ENCODE measurements at regions of chr14 and their contacts with region 1.

Region 1: DNA sequence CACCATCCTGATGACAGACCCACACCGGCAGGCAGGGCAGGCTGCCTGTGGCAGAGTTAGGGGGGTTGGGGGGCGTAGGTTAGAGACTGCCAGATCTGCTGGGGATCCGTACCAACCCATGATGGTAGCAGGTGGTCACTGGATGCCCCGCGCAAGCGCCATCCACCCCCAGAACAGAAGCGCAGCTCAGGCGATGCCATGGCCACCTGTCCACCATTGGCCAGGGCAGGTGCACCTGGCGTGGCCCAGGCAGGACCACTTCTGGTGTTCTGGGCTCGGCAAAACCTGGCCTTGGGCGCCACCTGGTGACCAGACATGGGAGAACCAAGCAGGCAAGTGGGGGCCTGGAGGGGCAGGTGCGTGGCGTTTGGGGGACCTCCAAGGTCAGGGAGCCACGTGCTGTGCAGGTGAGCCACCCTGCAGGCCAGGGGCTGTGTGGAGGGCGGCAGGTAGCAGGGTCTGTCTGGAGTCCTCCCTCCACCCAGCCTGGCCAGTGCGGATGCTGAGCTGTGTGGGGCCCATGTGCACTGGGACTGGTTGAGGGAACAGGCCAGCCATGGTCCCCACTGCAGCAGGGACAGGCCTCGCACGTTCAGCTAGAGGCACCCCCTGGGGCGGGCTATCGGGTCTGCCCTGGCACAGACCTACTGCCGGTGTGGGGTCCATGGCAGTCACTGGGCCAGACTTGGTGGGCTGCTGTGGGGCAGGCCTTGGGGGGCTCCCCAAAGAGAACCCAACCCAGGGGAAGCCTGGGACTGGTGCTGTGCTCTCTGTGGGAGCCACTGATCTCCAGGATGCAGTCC is 15.6 kb downstream of the BAG5 start:
- DNase-seq: peak; percentile 69 to 85 (median 83)
- H3K4me3 ChIP-seq: no peak overlapping the region
- H3K27ac ChIP-seq: no peak overlapping the region
- H3K4me1 ChIP-seq: peaks cover 22% of the 10 kb centered on the region
- H3K27me3 ChIP-seq: no peaks in the 10 kb centered on the region
- CTCF ChIP-seq: peak; percentile 41 to 98 (median 96)
- EP300 ChIP-seq: no peak
- POLR2A ChIP-seq: peak; percentile 32

Region 2: DNA sequence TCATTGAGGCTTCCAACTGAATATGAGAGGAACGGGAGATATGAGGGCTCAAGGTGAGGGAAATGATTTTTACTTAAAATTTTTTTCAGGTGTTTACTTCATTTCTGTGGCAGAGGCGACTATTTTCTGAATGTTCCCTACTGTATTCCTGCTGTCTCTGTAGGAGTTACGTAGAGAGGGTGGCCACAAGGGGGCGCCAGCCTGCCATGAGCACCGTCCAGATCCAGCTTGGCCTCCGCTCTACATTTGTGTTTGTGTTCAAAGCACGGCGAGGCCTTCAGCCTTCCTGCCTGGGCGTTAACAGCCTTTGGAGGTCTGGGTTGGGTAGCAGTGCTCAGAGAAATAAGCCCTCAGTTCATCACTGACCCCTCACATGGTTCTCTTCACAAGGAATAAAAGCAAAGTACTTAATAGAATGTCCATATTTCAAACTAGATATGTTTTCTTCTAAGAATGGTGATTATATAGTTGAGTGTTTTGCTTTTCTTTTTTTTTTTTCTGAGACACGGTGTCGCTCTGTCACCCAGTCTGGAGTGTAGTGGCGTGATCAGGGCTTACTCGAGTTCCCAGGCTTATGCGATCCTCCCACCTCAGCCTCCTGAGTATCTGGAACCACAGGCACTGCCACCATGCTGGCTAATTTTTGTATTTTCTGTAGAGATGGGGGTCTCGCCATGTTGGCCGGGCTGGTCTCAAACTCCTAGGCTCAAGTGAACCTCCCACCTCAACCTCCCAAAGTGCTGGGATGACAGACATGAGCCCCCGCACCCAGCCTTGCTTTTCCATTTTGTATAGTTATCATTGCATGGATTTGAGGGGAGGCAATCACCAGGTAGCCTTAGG is 46.5 kb before region 1 on chr14:
- intact Hi-C with region 1: loop called in 3 of 4 experiments (anchors 1 to 5 kb)
- DNase-seq: peak; percentile 90 to 96 (median 95)
- H3K4me3 ChIP-seq: no peak overlapping the region
- H3K27ac ChIP-seq: no peak overlapping the region
- H3K4me1 ChIP-seq: peaks cover 7% of the 10 kb centered on the region
- H3K27me3 ChIP-seq: no peaks in the 10 kb centered on the region
- CTCF ChIP-seq: peak; percentile 83 to 89 (median 86)
- EP300 ChIP-seq: no peak
- POLR2A ChIP-seq: no peak

Region 3: GRCh38 chr14:103518422-103519042 is 28.3 kb before region 1 on chr14:
- intact Hi-C with region 1: loop called in 2 of 4 experiments (anchors 1 to 5 kb)
- DNase-seq: peak; percentile 68 to 85 (median 80)
- H3K4me3 ChIP-seq: no peak overlapping the region
- H3K27ac ChIP-seq: peak overlapping the region; percentile 58 to 63
- H3K4me1 ChIP-seq: peaks cover 10% of the 10 kb centered on the region
- H3K27me3 ChIP-seq: no peaks in the 10 kb centered on the region
- CTCF ChIP-seq: peak; percentile 57 to 93 (median 85)
- EP300 ChIP-seq: no peak
- POLR2A ChIP-seq: peak; percentile 24